ENCODE measurements at regions of chr3 and their contacts with region 1.

Region 1: GRCh38 chr3:69671082-69671952 is 67.9 kb upstream of the MITF start:
- DNase-seq: peak; percentile 15 to 29
- H3K4me3 ChIP-seq: no peak overlapping the region
- H3K27ac ChIP-seq: no peak overlapping the region
- H3K4me1 ChIP-seq: peaks cover 0 to 5% of the 10 kb centered on the region in 2 donors
- H3K27me3 ChIP-seq: no peaks in the 10 kb centered on the region
- CTCF ChIP-seq: peak; percentile 64 to 89 (median 79)
- POLR2A ChIP-seq: no peak

Region 2: DNA sequence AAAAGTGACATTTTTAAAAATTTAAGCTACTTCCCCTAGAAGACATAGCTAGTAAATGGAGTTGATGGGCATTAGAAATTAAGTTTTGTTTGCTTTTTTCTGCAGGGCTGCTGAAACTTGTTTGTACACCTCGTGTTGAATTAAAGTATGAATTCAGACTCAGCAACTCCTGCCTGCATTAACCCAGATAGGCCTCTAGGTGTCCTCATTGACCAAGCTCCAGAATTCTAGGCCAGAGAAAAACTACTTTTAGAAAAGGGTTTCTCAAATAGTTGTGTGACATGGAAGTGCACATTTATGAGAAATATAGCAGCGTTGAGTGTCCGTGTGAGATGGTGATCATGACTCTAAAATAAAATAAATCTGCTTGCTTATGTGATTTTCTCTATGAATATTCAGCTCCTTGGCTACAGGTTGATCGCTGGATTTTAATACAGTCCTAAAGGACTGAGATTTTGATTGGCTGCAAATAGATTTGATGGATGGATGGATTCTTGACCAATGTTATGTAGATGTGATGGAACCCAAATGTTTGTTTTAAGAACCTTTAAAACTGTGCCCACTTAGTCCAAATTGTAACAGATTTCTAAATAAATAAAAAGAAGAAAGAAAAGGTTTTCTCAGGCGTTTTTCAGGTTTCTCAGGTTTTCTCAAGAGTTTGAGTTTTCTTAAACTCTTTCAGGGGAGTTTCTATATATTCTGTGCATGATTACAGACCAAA is 509.6 kb before region 1 on chr3:
- intact Hi-C with region 1: loop called (anchors 5 kb)
- DNase-seq: peak; percentile 14 to 18
- H3K4me3 ChIP-seq: no peak overlapping the region
- H3K27ac ChIP-seq: no peak overlapping the region
- H3K4me1 ChIP-seq: no peaks in the 10 kb centered on the region
- H3K27me3 ChIP-seq: no peaks in the 10 kb centered on the region
- CTCF ChIP-seq: peak; percentile 81 to 98 (median 93)
- POLR2A ChIP-seq: no peak

Region 3: DNA sequence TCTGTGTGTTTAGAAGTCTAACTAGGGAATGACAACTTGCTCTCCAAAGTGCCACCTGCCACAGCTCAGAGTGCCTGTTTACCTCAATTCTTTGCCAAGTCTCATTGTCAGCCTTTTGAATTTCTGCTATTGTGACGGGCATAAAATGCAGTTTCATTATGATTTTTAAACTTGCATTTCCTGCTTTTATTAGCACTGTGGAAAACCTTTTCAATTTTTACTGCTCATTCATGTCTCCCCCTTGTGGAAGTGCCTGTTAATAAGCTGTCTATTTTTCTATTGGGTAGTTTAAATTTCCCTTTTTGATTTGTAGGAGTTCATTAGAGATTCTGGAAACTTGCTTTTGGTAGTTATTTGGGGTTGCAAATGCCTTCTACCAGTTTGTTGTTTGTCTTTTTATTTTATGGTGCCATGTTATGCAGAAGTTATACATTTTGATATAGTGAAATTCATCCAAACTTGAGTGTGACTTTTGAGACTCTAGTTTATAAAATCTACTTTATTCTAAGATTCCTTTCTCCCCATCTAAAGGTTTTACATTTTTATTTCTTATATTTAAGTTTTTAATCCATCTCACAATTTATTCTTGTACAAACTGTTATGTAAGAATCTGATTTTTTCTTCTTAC is 231.6 kb before region 1 on chr3:
- intact Hi-C with region 1: loop called (anchors 10 kb)
- DNase-seq: no peak
- H3K4me3 ChIP-seq: no peak overlapping the region
- H3K27ac ChIP-seq: peak overlapping the region; percentile 45 to 82 (median 72)
- H3K4me1 ChIP-seq: peaks cover 47 to 50% of the 10 kb centered on the region in 2 donors
- H3K27me3 ChIP-seq: no peaks in the 10 kb centered on the region
- CTCF ChIP-seq: peak; percentile 39 to 80 (median 60)
- POLR2A ChIP-seq: no peak

Region 4: GRCh38 chr3:69532544-69533224 is 138.6 kb before region 1 on chr3:
- intact Hi-C with region 1: no loop called
- DNase-seq: peak; percentile 57 to 64
- H3K4me3 ChIP-seq: no peak overlapping the region
- H3K27ac ChIP-seq: peak overlapping the region; percentile 72 to 85 (median 72)
- H3K4me1 ChIP-seq: peaks cover 89 to 91% of the 10 kb centered on the region in 2 donors
- H3K27me3 ChIP-seq: no peaks in the 10 kb centered on the region
- CTCF ChIP-seq: no peak
- POLR2A ChIP-seq: peak in 1 of 2 donors; percentile 13